G401 (cell line): ENCODE measurements at regions of chr20 and their contacts with region 1.

Region 1: GRCh38 chr20:22346716-22347115 is 237.7 kb downstream of the FOXA2 start:
- DNase-seq: no peak

Region 2: DNA sequence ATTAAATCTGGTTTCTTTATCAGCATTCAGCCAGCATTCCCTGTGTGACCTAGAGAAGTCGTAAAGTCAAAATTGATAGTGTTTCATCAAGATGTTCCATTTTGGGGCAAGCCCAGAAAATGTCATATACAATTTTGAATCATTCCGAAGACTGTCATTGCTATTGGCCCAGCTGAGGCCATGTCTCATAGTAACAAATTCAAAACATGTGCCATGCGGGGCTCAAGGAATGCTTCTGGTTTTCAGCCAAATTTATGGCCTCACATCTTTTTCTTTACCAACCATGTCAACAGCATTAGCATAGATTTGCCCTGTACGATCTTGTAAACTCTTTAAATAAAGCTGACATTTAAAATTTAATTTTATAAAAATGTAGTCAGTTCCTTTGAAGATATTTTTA is 326.5 kb before region 1 on chr20:
- in situ Hi-C with region 1: no loop called
- DNase-seq: no peak

Region 3: DNA sequence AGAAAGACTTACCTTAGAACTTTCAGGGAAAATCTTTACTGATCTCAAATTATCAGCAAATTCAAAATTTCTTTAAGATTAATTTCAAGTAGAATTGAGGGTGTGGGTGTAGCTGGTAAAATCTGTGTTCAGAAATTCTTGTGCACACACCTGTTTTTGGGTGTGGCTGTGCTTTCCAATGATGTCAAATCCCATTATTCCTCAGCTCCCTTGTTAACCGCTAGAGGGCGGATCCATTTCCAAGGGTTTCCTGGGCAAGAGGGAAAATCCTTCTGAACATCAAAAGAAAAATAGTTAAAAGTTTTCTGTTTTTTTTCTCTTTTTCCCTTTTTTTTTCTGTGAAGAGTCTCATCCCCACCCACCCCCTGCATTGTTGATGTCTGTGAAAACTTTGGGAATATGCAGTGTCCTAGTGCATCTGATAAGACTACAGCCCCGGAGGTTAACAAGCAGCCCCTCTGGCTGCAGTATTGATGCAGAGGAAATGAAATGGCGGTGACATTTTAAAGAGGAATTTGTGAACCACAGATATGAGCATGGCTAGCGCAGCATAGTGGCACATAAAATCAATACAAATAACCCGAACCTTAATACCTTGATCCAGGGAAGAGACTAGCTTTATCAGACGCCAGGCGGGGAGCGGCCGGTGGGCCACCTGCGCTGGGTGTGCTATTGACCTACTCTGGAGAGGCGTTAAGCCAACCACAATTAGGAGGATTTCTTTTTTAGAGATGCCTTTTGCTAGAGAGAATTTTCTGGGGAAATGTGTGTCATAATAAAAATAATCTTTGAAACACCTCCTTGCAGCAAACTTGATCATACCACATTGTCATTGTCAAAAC is 106.7 kb after region 1 on chr20:
- in situ Hi-C with region 1: loop called (anchors 10 kb)
- DNase-seq: no peak